Activated CD8-positive, alpha-beta T cell treated with anti-CD3 and anti-CD28 coated beads, Interleukin-2, amount 10 ng/mL, durations not matched to agents 7 days and 5 days (primary cell): ENCODE measurements at regions of chr3 and their contacts with region 1.

Region 1: GRCh38 chr3:172461530-172462138 is 13.4 kb upstream of the GHSR start:
- DNase-seq: no peak
- ATAC-seq: peak; percentile 61
- H3K4me3 Mint-ChIP-seq: no peak overlapping the region
- H3K27ac Mint-ChIP-seq: no peak overlapping the region
- H3K4me1 Mint-ChIP-seq: no peaks in the 10 kb centered on the region
- H3K27me3 Mint-ChIP-seq: peaks cover 4% of the 10 kb centered on the region

Region 2: GRCh38 chr3:172476347-172476746 is 14.7 kb after region 1 on chr3:
- CTCF ChIA-PET with region 1: interaction called, 22 read pairs
- POLR2A ChIA-PET with region 1: no interaction called
- DNase-seq: no peak
- ATAC-seq: no peak
- H3K4me3 Mint-ChIP-seq: no peak overlapping the region
- H3K27ac Mint-ChIP-seq: no peak overlapping the region
- H3K4me1 Mint-ChIP-seq: peaks cover 18% of the 10 kb centered on the region
- H3K27me3 Mint-ChIP-seq: peaks cover 4% of the 10 kb centered on the region

Region 3: GRCh38 chr3:172622916-172623700 is 161.5 kb after region 1 on chr3:
- CTCF ChIA-PET with region 1: interaction called, 18 read pairs
- POLR2A ChIA-PET with region 1: no interaction called
- DNase-seq: peak; percentile 62
- ATAC-seq: peak; percentile 67
- H3K4me3 Mint-ChIP-seq: no peak overlapping the region
- H3K27ac Mint-ChIP-seq: no peak overlapping the region
- H3K4me1 Mint-ChIP-seq: peaks cover 10% of the 10 kb centered on the region
- H3K27me3 Mint-ChIP-seq: no peaks in the 10 kb centered on the region

Region 4: GRCh38 chr3:172666873-172667694 is 205.4 kb after region 1 on chr3:
- CTCF ChIA-PET with region 1: interaction called, 32 read pairs
- POLR2A ChIA-PET with region 1: no interaction called
- DNase-seq: peak; percentile 90
- ATAC-seq: peak; percentile 100
- H3K4me3 Mint-ChIP-seq: no peak overlapping the region
- H3K27ac Mint-ChIP-seq: no peak overlapping the region
- H3K4me1 Mint-ChIP-seq: peaks cover 19% of the 10 kb centered on the region
- H3K27me3 Mint-ChIP-seq: peaks cover 5% of the 10 kb centered on the region

Region 5: GRCh38 chr3:172735014-172735413 is 273.4 kb after region 1 on chr3:
- CTCF ChIA-PET with region 1: no interaction called
- POLR2A ChIA-PET with region 1: no interaction called
- DNase-seq: no peak
- ATAC-seq: no peak
- H3K4me3 Mint-ChIP-seq: no peak overlapping the region
- H3K27ac Mint-ChIP-seq: no peak overlapping the region
- H3K4me1 Mint-ChIP-seq: no peaks in the 10 kb centered on the region
- H3K27me3 Mint-ChIP-seq: peaks cover 29% of the 10 kb centered on the region